ENCODE measurements at regions of chrX and their contacts with region 1.

Region 1: GRCh38 chrX:149487292-149487691 is 17.8 kb downstream of the IDS start:
- DNase-seq: no peak

Region 2: DNA sequence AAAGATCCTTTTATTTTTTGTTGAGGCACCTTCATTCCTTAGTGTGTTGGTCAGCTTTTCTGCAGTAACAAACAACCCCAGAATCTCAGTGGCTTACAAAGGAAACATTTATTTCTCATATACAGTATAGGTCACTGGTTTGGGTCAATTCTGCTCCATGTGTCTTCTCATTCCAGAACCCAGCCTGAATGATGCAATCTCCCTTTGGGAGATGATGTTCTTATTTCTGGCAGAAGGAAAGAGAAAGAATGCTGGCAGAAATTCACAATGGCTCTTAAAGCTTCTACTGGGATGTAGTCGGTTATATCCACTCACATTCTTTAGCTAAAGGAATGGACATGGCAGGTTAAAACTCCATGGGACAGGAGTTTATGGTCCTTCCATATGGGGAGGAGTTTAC is 24.4 kb before region 1 on chrX:
- intact Hi-C with region 1: loop called in 1 of 2 experiments (anchors 1 kb)
- DNase-seq: no peak

Measured in posterior vena cava (tissue), 2 donors.